PC-3 (cell line): ENCODE measurements at regions of chr1 and their contacts with region 1.

Region 1: DNA sequence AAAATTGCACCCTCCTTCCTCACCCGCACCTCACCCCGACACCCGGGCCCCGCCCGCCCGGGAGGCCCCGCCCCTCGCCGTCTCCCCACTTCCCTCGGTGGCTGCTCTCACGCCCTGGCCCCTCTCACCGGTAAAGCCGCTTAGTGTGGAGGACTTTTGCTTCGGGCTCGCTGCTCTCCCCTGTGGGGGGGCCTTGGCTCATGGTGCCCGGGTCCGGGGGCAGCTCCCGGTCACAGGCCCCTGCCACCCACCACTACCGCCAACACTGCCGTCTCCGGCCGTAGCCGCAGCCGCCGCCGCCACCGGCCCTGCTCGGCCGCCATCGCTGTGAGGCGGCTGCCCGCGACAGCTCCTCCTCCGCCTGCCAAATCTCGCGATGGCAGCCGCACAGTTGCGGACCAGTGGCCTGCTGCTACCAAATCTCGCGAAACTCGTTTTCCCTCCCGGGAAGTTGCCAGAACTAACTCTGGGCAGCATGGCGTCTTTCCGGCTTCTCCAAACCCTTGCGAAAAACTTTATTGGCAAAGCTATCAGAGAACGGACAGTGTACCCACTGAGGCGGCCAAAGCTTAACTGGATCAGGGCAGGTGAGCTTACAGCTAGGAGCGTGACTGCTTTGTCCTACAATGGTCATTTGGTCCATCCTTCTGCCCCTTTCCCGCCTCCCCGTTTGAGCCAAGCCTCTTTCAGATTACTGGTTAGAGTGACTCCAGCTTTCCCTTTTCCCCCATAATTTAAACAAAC is at the start of gene SMG5:
- DNase-seq: peak; percentile 100
- ATAC-seq: peak; percentile 91
- H3K4me3 ChIP-seq: peak within 1 kb of the TSS; percentile 86
- H3K27ac ChIP-seq: peak within 1 kb of the TSS; percentile 76
- H3K4me1 ChIP-seq: peaks cover 32% of the 10 kb centered on the region
- H3K27me3 ChIP-seq: no peaks in the 10 kb centered on the region
- CTCF ChIP-seq: no peak
- total RNA-seq, gene SMG5: 126 and 130 TPM in 2 replicates

Region 2: GRCh38 chr1:156262461-156263287 is 20.0 kb before region 1 on chr1:
- CTCF ChIA-PET with region 1: no interaction called
- POLR2A ChIA-PET with region 1: interaction called, 3 read pairs
- intact Hi-C with region 1: loop called (anchors 1 kb)
- DNase-seq: peak; percentile 98
- ATAC-seq: peak; percentile 85
- H3K4me3 ChIP-seq: peak overlapping the region; percentile 16; the same call in 1 of the 2 replicates
- H3K27ac ChIP-seq: peak overlapping the region; percentile 91
- H3K4me1 ChIP-seq: peaks cover 25% of the 10 kb centered on the region
- H3K27me3 ChIP-seq: no peaks in the 10 kb centered on the region
- CTCF ChIP-seq: no peak

Region 3: GRCh38 chr1:156848461-156849150 is 566.0 kb after region 1 on chr1:
- CTCF ChIA-PET with region 1: no interaction called
- POLR2A ChIA-PET with region 1: no interaction called
- intact Hi-C with region 1: no loop called
- DNase-seq: no peak
- ATAC-seq: no peak
- H3K4me3 ChIP-seq: no peak overlapping the region
- H3K27ac ChIP-seq: no peak overlapping the region
- H3K4me1 ChIP-seq: 0 out of 2 replicates have a peak, but pooled peaks cover 5% of the 10 kb centered on the region
- H3K27me3 ChIP-seq: no peaks in the 10 kb centered on the region
- CTCF ChIP-seq: no peak